ENCODE measurements at regions of chr4 and their contacts with region 1.

Region 1: GRCh38 chr4:109815151-109816081 is at the start of gene GAR1:
- DNase-seq: peak; percentile 85 to 93 (median 87)
- H3K4me3 ChIP-seq: peak within 1 kb of the TSS; percentile 98 to 100
- H3K4me3 Mint-ChIP-seq: peak within 1 kb of the TSS; percentile 97 to 99 (median 98)
- H3K27ac ChIP-seq: peak within 1 kb of the TSS; percentile 93
- H3K27ac Mint-ChIP-seq: peak within 1 kb of the TSS; percentile 97 to 99 (median 99)
- H3K4me1 ChIP-seq: peaks cover 22% of the 10 kb centered on the region
- H3K4me1 Mint-ChIP-seq: peaks cover 27 to 44% (median 36%) of the 10 kb centered on the region in 4 donors
- H3K27me3 ChIP-seq: no peaks in the 10 kb centered on the region
- H3K27me3 Mint-ChIP-seq: no peaks in the 10 kb centered on the region
- total RNA-seq, gene GAR1: 13.7 to 14.1 TPM

Region 2: GRCh38 chr4:108650212-108651013 is 1165.0 kb before region 1 on chr4 and contains the start of gene OSTC:
- CTCF ChIA-PET with region 1: interaction called, 4 read pairs
- POLR2A ChIA-PET with region 1: no interaction called
- intact Hi-C with region 1: loop called (anchors 2 kb)
- DNase-seq: peak; percentile 91 to 95 (median 93)
- H3K4me3 ChIP-seq: peak within 1 kb of the TSS; percentile 77 to 86
- H3K4me3 Mint-ChIP-seq: peak within 1 kb of the TSS; percentile 93 to 99 (median 98)
- H3K27ac ChIP-seq: peak within 1 kb of the TSS; percentile 98
- H3K27ac Mint-ChIP-seq: peak within 1 kb of the TSS; percentile 98 to 99 (median 99)
- H3K4me1 ChIP-seq: peaks cover 37% of the 10 kb centered on the region
- H3K4me1 Mint-ChIP-seq: peaks cover 23 to 50% (median 37%) of the 10 kb centered on the region in 4 donors
- H3K27me3 ChIP-seq: no peaks in the 10 kb centered on the region
- H3K27me3 Mint-ChIP-seq: no peaks in the 10 kb centered on the region
- total RNA-seq, gene OSTC: 67.9 to 72.1 TPM

Region 3: GRCh38 chr4:109729718-109730618 is 85.4 kb before region 1 on chr4 and contains the start of gene PLA2G12A:
- CTCF ChIA-PET with region 1: interaction called, 5 read pairs
- POLR2A ChIA-PET with region 1: interaction called, 5 read pairs
- intact Hi-C with region 1: loop called (anchors 1 kb)
- DNase-seq: peak; percentile 78 to 90 (median 87)
- H3K4me3 ChIP-seq: peak within 1 kb of the TSS; percentile 58 to 94
- H3K4me3 Mint-ChIP-seq: peak within 1 kb of the TSS; percentile 89 to 93 (median 91)
- H3K27ac ChIP-seq: peak within 1 kb of the TSS; percentile 72
- H3K27ac Mint-ChIP-seq: peak within 1 kb of the TSS; percentile 73 to 94 (median 90)
- H3K4me1 ChIP-seq: peaks cover 18% of the 10 kb centered on the region
- H3K4me1 Mint-ChIP-seq: peaks cover 18 to 32% (median 21%) of the 10 kb centered on the region in 4 donors
- H3K27me3 ChIP-seq: no peaks in the 10 kb centered on the region
- H3K27me3 Mint-ChIP-seq: peaks cover 0 to 1% of the 10 kb centered on the region in 2 donors
- total RNA-seq, gene PLA2G12A: 15.7 to 18.1 TPM

Measured in CD4-positive, alpha-beta memory T cell (primary cell).